PC-9 (cell line): ENCODE measurements at regions of chr17 and their contacts with region 1.

Region 1: GRCh38 chr17:27353461-27354050 is 59.6 kb downstream of the WSB1 start:
- DNase-seq: peak; percentile 76 to 92
- H3K4me3 ChIP-seq: peak overlapping the region; percentile 62
- H3K27ac ChIP-seq: peak overlapping the region; percentile 74
- H3K4me1 ChIP-seq: peaks cover 11% of the 10 kb centered on the region; the same call in 1 of the 2 replicates
- H3K27me3 ChIP-seq: no peaks in the 10 kb centered on the region
- CTCF ChIP-seq: peak; percentile 70

Region 2: DNA sequence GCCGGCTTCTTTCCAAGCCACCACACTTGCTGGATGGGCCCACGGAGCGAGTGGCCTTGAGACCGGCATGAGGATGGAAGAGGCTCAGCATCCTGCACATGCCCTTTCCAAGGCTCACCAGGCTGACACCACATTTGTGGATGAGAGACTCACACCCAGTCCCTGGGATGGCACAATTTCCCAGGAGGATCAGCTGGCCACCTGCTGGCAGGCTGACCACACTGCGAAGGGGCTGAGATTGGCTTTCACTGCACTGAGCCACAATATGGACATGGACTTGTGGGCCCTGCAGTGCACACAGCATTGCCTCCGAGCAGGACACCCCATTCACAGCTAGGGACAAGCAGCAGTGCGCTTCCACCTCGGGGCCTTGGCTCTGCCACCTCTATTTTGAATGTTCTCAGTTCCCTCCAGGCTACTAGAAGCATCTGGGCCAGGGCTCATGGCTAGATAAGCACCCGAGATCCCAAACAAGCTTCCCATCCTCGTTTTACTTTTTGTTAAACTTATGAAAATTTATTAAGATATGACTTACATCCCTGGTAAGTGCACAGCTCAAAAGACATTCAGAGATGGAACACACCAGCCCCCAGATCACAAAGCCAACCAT is 77.4 kb after region 1 on chr17:
- CTCF ChIA-PET with region 1: no interaction called
- POLR2A ChIA-PET with region 1: no interaction called
- intact Hi-C with region 1: loop called (anchors 2 kb)
- DNase-seq: peak in 1 of 2 experiments; percentile 41
- H3K4me3 ChIP-seq: no peak overlapping the region
- H3K27ac ChIP-seq: no peak overlapping the region
- H3K4me1 ChIP-seq: no peaks in the 10 kb centered on the region
- H3K27me3 ChIP-seq: no peaks in the 10 kb centered on the region
- CTCF ChIP-seq: peak; percentile 76

Region 3: DNA sequence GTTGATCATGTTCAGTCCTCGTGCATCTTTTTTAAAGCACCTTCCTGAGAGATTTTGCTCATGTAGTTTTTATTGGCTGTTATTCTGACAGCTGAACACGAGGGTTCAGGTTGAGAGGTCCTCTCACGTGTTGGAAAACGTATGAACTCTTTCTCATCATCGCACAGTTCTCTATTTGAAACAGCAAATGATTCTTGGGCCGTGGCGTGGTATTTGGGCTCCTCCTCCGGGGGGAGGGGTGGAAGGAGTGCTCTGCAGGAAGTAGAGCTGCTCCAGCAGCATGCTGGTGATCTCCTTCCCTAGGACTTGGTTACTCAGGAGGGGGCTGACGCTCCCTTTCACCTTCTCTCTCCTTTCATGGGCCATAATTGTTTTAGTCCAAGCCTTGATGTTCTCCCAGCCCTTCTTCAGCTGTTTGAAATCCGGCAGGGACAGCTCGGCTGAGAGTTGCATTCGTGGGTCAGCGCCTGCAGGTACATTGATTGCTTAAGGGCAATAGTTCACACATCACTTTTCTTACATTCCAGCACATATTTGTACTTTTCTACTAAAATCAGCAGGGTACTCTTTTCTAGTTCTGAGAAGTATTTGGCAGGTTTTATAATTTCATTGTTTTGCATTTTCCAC is 173.2 kb after region 1 on chr17:
- CTCF ChIA-PET with region 1: no interaction called
- POLR2A ChIA-PET with region 1: no interaction called
- intact Hi-C with region 1: loop called (anchors 1 kb)
- DNase-seq: no peak
- H3K4me3 ChIP-seq: no peak overlapping the region
- H3K27ac ChIP-seq: no peak overlapping the region
- H3K4me1 ChIP-seq: peaks cover 48% of the 10 kb centered on the region
- H3K27me3 ChIP-seq: no peaks in the 10 kb centered on the region
- CTCF ChIP-seq: no peak